ENCODE measurements at regions of chr11 and their contacts with region 1.

Region 1: DNA sequence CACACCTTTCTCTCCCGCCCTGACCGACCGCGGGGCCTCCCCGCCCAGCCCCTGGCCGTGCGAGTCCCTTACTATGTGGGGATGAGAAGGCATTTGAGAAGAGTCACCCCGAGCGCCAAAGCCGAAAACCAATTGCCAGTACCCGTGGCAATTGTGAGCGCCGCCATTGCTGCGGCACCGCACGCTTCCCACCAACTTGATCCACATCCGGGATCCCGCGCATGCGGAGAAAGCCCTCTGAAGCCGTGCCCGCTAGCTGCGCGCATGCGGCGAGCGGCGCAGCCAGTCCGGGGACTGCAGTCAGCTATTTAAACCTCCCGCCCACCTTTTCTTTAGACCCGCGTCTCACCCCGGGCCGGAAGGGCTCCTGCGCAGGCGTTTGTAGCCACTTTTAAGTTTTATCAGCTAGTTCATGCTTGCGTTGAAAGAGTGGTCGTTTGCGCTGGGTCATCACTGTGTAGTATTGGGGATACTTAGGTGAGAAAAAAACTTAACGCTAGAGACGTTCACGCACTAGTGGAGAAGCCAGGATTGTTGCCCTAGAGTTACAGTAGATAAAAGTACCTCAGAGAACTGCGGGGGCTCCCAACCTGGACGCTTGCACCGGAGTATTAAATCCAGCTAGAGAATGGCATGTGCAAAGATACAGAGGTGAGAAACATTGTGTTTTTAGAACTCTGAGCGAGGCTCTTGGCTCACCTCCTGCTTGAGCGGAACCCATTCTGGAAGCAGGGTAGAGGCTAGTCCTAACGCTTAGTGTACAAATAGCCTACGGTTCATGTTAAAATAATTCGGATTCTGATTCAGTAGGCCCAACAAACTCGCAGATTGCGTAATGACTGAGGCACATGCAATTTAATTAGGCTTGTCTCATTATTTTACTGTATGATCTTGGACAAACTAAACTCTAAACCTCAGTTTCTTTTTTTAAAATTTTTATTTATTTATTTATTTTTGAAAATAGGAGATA is at the start of gene ALG8:
- DNase-seq: peak; percentile 94 to 97 (median 96)
- ATAC-seq: peak; percentile 95
- H3K4me3 ChIP-seq: peak within 1 kb of the TSS; percentile 88
- H3K4me3 Mint-ChIP-seq: peak within 1 kb of the TSS; percentile 85 to 98 (median 95)
- H3K27ac ChIP-seq: peak within 1 kb of the TSS; percentile 82
- H3K27ac Mint-ChIP-seq: peak within 1 kb of the TSS; percentile 87 to 98 (median 93)
- H3K4me1 ChIP-seq: peaks cover 8 to 13% of the 10 kb centered on the region in 2 donors
- H3K4me1 Mint-ChIP-seq: peaks cover 23 to 51% (median 42%) of the 10 kb centered on the region in 7 donors
- H3K27me3 ChIP-seq: no peaks in the 10 kb centered on the region
- H3K27me3 Mint-ChIP-seq: no peaks in the 10 kb centered on the region
- total RNA-seq, gene ALG8: 27.2 to 53.8 (median 30.8) TPM

Region 2: GRCh38 chr11:77637345-77638165 is 502.2 kb before region 1 on chr11 and contains the start of gene CLNS1A:
- CTCF ChIA-PET with region 1: no interaction called
- POLR2A ChIA-PET with region 1: no interaction called
- intact Hi-C with region 1: loop called in 1 of 2 experiments (anchors 2 kb)
- DNase-seq: peak; percentile 53 to 79 (median 75)
- ATAC-seq: peak; percentile 99
- H3K4me3 ChIP-seq: peak within 1 kb of the TSS; percentile 77
- H3K4me3 Mint-ChIP-seq: peak within 1 kb of the TSS; percentile 91 to 97 (median 96)
- H3K27ac ChIP-seq: peak within 1 kb of the TSS; percentile 87
- H3K27ac Mint-ChIP-seq: peak within 1 kb of the TSS; percentile 86 to 98 (median 95)
- H3K4me1 ChIP-seq: peaks cover 7 to 19% of the 10 kb centered on the region in 2 donors
- H3K4me1 Mint-ChIP-seq: peaks cover 34 to 49% (median 44%) of the 10 kb centered on the region in 7 donors
- H3K27me3 ChIP-seq: no peaks in the 10 kb centered on the region
- H3K27me3 Mint-ChIP-seq: no peaks in the 10 kb centered on the region
- total RNA-seq, gene CLNS1A: 82.2 to 149 (median 113) TPM

Region 3: GRCh38 chr11:77968337-77968736 is 171.4 kb before region 1 on chr11:
- CTCF ChIA-PET with region 1: no interaction called
- POLR2A ChIA-PET with region 1: no interaction called
- intact Hi-C with region 1: no loop called
- DNase-seq: no peak
- ATAC-seq: no peak
- H3K4me3 ChIP-seq: no peak overlapping the region
- H3K4me3 Mint-ChIP-seq: no peak overlapping the region
- H3K27ac ChIP-seq: no peak overlapping the region
- H3K27ac Mint-ChIP-seq: no peak overlapping the region
- H3K4me1 ChIP-seq: no peaks in the 10 kb centered on the region
- H3K4me1 Mint-ChIP-seq: no peaks in the 10 kb centered on the region
- H3K27me3 ChIP-seq: no peaks in the 10 kb centered on the region
- H3K27me3 Mint-ChIP-seq: no peaks in the 10 kb centered on the region

Region 4: DNA sequence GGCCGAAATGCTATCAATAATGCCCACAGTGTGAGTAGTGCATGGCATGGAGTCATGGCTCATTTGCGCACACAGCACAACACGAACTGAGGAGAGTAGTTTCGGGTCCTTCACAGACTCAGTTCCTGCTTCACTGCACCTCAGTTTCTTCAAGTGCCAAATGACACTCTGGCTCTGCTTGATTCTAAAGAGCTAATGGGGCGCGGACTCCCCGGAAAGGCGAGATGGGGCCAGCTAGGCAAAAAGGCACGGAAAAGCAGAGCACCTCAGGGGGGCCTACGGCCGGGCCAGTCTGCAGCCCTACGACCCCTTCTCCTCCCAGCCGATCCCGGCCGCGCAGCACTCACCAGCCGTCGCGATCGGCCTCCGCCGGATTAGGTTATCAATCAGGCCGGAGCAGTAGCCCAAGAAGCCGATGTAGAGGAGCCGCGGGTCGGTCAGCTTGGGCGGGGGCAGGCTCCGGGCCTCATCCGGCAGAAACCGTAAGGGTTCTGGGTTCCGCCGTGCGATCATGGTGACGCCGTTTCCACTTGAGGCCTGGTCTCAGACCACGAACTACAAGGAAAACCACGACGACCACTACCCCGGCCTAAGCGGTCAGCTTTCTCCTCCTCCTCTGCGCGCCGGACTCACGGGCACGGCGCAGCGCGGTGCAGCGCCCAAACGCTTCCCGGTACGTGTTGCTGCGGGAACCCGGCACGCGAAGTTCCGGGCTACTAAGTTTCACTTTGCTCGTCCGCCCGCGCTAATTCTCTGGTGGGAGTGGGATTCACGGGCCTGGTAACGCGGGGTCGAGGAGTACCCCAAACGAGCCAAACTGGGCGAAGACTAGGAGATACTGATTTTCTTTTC is 60.2 kb before region 1 on chr11 and contains the start of gene NDUFC2:
- CTCF ChIA-PET with region 1: no interaction called
- POLR2A ChIA-PET with region 1: interaction called, 8 read pairs
- intact Hi-C with region 1: loop called (anchors 1 kb)
- DNase-seq: peak; percentile 37 to 73 (median 61)
- ATAC-seq: peak; percentile 90
- H3K4me3 ChIP-seq: peak within 1 kb of the TSS; percentile 99
- H3K4me3 Mint-ChIP-seq: peak within 1 kb of the TSS; percentile 92 to 98 (median 95)
- H3K27ac ChIP-seq: peak within 1 kb of the TSS; percentile 83
- H3K27ac Mint-ChIP-seq: peak within 1 kb of the TSS; percentile 90 to 97 (median 95)
- H3K4me1 ChIP-seq: peaks cover 38 to 43% of the 10 kb centered on the region in 2 donors
- H3K4me1 Mint-ChIP-seq: peaks cover 41 to 68% (median 53%) of the 10 kb centered on the region in 7 donors
- H3K27me3 ChIP-seq: no peaks in the 10 kb centered on the region
- H3K27me3 Mint-ChIP-seq: no peaks in the 10 kb centered on the region
- total RNA-seq, gene NDUFC2: 43.4 to 189 (median 64.7) TPM

Region 5: GRCh38 chr11:78202733-78203167 is 63.0 kb after region 1 on chr11:
- CTCF ChIA-PET with region 1: no interaction called
- POLR2A ChIA-PET with region 1: interaction called, 23 read pairs
- intact Hi-C with region 1: loop called (anchors 1 kb)
- DNase-seq: peak; percentile 43 to 92 (median 84)
- ATAC-seq: peak; percentile 86
- H3K4me3 ChIP-seq: peak overlapping the region; percentile 53
- H3K4me3 Mint-ChIP-seq: peak overlapping the region; percentile 79 to 91 (median 87)
- H3K27ac ChIP-seq: peak overlapping the region; percentile 91
- H3K27ac Mint-ChIP-seq: peak overlapping the region; percentile 93 to 100 (median 97)
- H3K4me1 ChIP-seq: peaks cover 19 to 36% of the 10 kb centered on the region in 2 donors
- H3K4me1 Mint-ChIP-seq: peaks cover 25 to 65% (median 55%) of the 10 kb centered on the region in 7 donors
- H3K27me3 ChIP-seq: no peaks in the 10 kb centered on the region
- H3K27me3 Mint-ChIP-seq: no peaks in the 10 kb centered on the region

Region 6: DNA sequence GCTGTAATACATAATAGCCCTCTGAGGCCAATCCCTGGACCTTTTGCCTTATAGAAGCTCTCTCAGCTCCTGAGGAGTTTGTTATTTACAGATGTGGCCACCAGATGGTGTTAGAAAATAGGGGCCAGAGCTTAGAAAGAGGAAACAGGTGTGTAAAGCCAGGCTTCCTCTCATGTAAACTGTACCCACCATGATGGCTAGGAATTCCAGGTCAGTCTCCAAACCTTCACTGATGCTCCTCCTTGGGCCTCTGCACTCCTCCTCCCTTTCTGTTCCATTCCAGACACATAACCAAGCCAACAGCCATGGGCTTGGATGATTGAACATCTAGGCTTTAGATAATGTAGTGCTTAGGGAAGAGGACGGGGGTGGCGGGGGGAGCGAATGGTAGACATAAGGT is 88.8 kb after region 1 on chr11:
- CTCF ChIA-PET with region 1: no interaction called
- POLR2A ChIA-PET with region 1: no interaction called
- intact Hi-C with region 1: loop called in 1 of 2 experiments (anchors 1 kb)
- DNase-seq: peak in 2 of 9 donors; percentile 18 to 21
- ATAC-seq: peak; percentile 76
- H3K4me3 ChIP-seq: no peak overlapping the region
- H3K4me3 Mint-ChIP-seq: no peak overlapping the region
- H3K27ac ChIP-seq: no peak overlapping the region
- H3K27ac Mint-ChIP-seq: peak overlapping the region in 2 of 9 donors; percentile 57 to 65
- H3K4me1 ChIP-seq: no peaks in the 10 kb centered on the region
- H3K4me1 Mint-ChIP-seq: peaks cover 6 to 61% (median 9%) of the 10 kb centered on the region in 7 donors
- H3K27me3 ChIP-seq: no peaks in the 10 kb centered on the region
- H3K27me3 Mint-ChIP-seq: no peaks in the 10 kb centered on the region

Region 7: GRCh38 chr11:78574386-78575381 is 435.0 kb after region 1 on chr11 and contains the start of gene NARS2:
- CTCF ChIA-PET with region 1: no interaction called
- POLR2A ChIA-PET with region 1: interaction called, 6 read pairs
- intact Hi-C with region 1: loop called in 1 of 2 experiments (anchors 1 kb)
- DNase-seq: peak; percentile 89 to 97 (median 96)
- ATAC-seq: peak; percentile 99
- H3K4me3 ChIP-seq: peak within 1 kb of the TSS; percentile 70
- H3K4me3 Mint-ChIP-seq: peak within 1 kb of the TSS; percentile 93 to 100 (median 98)
- H3K27ac ChIP-seq: peak within 1 kb of the TSS; percentile 96
- H3K27ac Mint-ChIP-seq: peak within 1 kb of the TSS; percentile 86 to 99 (median 98)
- H3K4me1 ChIP-seq: peaks cover 7 to 21% of the 10 kb centered on the region in 2 donors
- H3K4me1 Mint-ChIP-seq: peaks cover 24 to 63% (median 50%) of the 10 kb centered on the region in 7 donors
- H3K27me3 ChIP-seq: no peaks in the 10 kb centered on the region
- H3K27me3 Mint-ChIP-seq: peaks cover 0 to 5% (median 0%) of the 10 kb centered on the region in 5 donors
- total RNA-seq, gene NARS2: 9.3 to 21.5 (median 19.7) TPM

Measured in naive thymus-derived CD4-positive, alpha-beta T cell (primary cell).